B cell (primary cell): ENCODE measurements at regions of chr19 and their contacts with region 1.

Region 1: DNA sequence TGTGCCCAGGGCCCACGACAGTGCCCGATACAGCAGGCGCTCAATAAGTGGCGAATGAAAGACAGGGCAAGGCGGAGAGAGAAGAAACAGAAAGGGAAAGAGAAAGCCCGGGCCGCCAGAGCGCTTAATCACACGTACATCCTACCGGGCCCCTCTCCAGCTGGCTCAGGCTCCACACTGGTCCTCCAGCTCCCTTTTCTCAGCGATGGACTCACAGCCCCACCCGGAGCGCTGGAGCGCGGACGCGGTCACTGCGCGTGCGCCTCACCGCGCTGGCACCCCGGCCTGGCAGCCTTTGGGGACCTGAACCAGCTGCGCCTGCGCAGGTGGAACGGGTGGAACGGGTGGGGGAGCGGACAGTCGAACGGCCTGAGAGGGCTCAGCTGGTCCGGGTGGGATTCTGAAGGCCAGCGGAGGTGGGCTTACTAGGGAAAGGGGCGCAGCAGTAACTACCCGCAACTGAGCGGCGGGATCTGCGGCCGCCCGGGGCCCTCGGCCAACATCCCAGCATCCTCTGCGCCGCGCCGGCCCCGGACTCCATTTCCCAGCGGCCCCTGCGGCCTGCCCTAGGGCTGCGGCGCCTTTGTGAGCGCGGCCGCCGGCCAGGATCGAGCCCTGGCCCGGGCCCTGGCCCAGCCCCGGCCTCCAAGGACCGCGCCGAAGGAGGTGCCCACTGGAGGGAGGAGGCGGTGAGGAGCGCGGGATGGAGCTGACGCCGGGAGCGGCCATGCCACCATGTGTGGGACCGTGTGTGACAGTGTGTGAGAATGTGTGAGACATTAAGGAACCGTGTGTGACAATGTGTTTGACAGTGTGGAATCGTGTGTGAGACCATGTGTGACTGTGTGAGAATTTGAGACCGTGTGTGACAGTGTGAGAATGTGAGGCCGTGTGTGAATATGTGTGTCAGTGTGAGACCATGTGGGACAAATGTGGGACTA is at the start of gene ZNF583:
- DNase-seq: peak; percentile 95
- ATAC-seq: peak; percentile 89
- H3K4me3 ChIP-seq: peak within 1 kb of the TSS; percentile 75 to 97 (median 84)
- H3K4me3 Mint-ChIP-seq: peak within 1 kb of the TSS; percentile 92
- H3K27ac ChIP-seq: peak within 1 kb of the TSS; percentile 90 to 92
- H3K27ac Mint-ChIP-seq: peak within 1 kb of the TSS; percentile 92
- H3K4me1 ChIP-seq: peaks cover 14 to 19% of the 10 kb centered on the region in 2 donors
- H3K4me1 Mint-ChIP-seq: peaks cover 24% of the 10 kb centered on the region
- H3K27me3 ChIP-seq: no peaks in the 10 kb centered on the region
- H3K27me3 Mint-ChIP-seq: no peaks in the 10 kb centered on the region
- CTCF ChIP-seq: no peak
- total RNA-seq, gene ZNF583: 11.1 and 11.7 TPM in 2 replicates

Region 2: DNA sequence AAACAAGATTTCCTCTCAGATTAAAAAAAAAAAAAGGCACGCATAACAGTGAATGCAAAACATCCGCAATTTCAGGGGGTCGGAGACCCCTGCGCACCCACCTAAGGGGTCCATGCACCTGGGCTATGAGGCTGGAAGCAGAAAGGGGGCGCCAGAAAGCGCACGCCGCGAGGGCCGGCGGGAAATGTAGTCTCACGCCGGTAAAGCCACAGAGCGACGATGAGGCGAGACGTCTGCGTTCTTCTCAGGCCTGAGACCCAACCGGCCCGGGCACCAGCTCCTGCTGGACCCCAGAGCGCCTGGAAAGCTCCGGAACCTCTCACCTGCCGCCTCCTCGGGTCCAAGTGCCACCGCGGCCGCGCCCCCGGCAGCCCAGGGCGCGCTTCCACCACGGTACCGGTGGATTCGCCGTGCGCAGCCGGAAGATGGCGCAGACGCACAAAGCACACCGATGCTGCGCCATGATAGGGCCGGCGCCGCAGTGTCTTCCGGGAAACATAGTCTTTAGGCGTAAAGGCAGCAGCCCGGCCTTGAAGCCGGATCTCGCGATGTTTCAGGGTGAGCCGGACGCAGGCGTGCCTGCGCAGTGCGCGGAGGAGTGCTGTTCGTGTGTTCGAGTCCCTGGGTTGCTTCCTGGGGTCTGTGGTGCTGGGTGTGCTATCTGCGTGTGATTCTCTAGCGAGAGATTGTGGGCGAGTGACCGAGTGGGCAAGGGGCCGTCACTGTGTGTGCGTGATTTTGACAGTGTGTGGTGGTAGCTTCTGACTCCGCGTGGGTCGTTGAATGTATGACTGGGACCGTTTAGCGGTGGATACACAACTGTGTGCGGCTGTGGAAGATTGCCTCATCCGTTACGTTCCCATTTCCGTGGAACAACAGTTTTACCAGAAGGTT is 10.7 kb before region 1 on chr19 and contains the start of gene ZNF582:
- CTCF ChIA-PET with region 1: interaction called, 4 read pairs
- POLR2A ChIA-PET with region 1: interaction called, 6 read pairs
- intact Hi-C with region 1: loop called (anchors 1 kb)
- DNase-seq: peak; percentile 96
- ATAC-seq: peak; percentile 95
- H3K4me3 ChIP-seq: peak within 1 kb of the TSS; percentile 75 to 96 (median 82)
- H3K4me3 Mint-ChIP-seq: peak within 1 kb of the TSS; percentile 100
- H3K27ac ChIP-seq: peak within 1 kb of the TSS; percentile 93 to 98
- H3K27ac Mint-ChIP-seq: peak within 1 kb of the TSS; percentile 99
- H3K4me1 ChIP-seq: peaks cover 4 to 8% of the 10 kb centered on the region in 2 donors
- H3K4me1 Mint-ChIP-seq: peaks cover 17% of the 10 kb centered on the region
- H3K27me3 ChIP-seq: no peaks in the 10 kb centered on the region
- H3K27me3 Mint-ChIP-seq: no peaks in the 10 kb centered on the region
- CTCF ChIP-seq: peak; percentile 88
- total RNA-seq, gene ZNF582: 10.0 and 10.1 TPM in 2 replicates

Region 3: DNA sequence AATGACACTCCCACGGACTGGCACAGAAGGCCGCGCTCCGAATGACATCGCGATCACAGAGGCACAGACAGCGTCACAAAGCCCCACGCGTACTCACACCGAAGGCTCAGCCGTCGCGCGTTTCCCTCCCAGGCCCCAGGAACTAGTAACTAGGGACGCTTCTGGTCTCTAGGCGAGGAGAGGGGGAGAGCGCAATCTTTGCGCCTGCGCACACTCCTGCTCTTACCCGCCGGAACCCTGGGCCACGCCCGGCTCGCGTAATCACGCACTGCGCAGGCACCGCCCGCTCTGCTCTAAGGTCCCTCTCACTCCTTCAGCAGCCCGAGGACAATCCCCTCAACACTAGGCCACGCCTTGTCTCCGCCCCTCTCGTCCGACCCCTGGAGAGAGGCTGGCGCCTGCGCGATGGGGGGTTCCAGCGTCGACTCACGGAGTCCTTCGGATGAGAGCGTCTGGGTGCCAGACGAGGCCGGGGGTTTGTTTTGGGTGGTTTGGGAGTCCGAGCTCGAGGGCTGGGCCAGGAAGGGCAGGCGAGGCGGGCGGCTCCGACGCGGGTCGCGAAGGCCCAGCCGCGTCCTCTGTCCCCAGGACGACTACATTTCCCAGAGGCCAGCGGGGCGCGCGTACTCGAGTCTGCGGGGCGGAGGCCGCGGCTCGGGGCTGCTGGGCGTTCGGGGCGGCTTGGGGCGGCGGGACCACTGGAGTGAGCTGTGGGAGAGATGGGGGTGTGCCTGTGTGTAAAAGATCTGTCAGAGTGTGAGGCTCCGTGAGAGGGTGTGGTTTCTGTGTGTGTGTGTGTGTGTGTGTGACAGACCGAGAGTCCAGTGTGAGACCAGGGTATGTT is 103.6 kb after region 1 on chr19 and contains the start of gene ZNF471:
- CTCF ChIA-PET with region 1: no interaction called
- POLR2A ChIA-PET with region 1: no interaction called
- intact Hi-C with region 1: loop called (anchors 1 kb)
- DNase-seq: peak; percentile 95
- ATAC-seq: peak; percentile 99
- H3K4me3 ChIP-seq: peak within 1 kb of the TSS; percentile 55 to 77 (median 67)
- H3K4me3 Mint-ChIP-seq: no peak within 1 kb of the TSS
- H3K27ac ChIP-seq: peak within 1 kb of the TSS; percentile 89 to 97
- H3K27ac Mint-ChIP-seq: no peak within 1 kb of the TSS
- H3K4me1 ChIP-seq: peaks cover 10 to 13% of the 10 kb centered on the region in 2 donors
- H3K4me1 Mint-ChIP-seq: peaks cover 9% of the 10 kb centered on the region
- H3K27me3 ChIP-seq: no peaks in the 10 kb centered on the region
- H3K27me3 Mint-ChIP-seq: no peaks in the 10 kb centered on the region
- CTCF ChIP-seq: no peak
- total RNA-seq, gene ZNF471: 4.7 and 5.9 TPM in 2 replicates

Region 4: GRCh38 chr19:56567274-56568120 is 163.5 kb after region 1 on chr19 and contains the start of gene ZNF470:
- CTCF ChIA-PET with region 1: no interaction called
- POLR2A ChIA-PET with region 1: no interaction called
- intact Hi-C with region 1: loop called (anchors 1 kb)
- DNase-seq: peak; percentile 90
- ATAC-seq: peak; percentile 98
- H3K4me3 ChIP-seq: peak within 1 kb of the TSS; percentile 68 to 97 (median 91)
- H3K4me3 Mint-ChIP-seq: peak within 1 kb of the TSS; percentile 100
- H3K27ac ChIP-seq: peak within 1 kb of the TSS; percentile 50 to 68
- H3K27ac Mint-ChIP-seq: peak within 1 kb of the TSS; percentile 98
- H3K4me1 ChIP-seq: peaks cover 9 to 12% of the 10 kb centered on the region in 2 donors
- H3K4me1 Mint-ChIP-seq: peaks cover 17% of the 10 kb centered on the region
- H3K27me3 ChIP-seq: no peaks in the 10 kb centered on the region
- H3K27me3 Mint-ChIP-seq: no peaks in the 10 kb centered on the region
- CTCF ChIP-seq: no peak
- total RNA-seq, gene ZNF470: 6.9 and 11.9 TPM in 2 replicates

Region 5: DNA sequence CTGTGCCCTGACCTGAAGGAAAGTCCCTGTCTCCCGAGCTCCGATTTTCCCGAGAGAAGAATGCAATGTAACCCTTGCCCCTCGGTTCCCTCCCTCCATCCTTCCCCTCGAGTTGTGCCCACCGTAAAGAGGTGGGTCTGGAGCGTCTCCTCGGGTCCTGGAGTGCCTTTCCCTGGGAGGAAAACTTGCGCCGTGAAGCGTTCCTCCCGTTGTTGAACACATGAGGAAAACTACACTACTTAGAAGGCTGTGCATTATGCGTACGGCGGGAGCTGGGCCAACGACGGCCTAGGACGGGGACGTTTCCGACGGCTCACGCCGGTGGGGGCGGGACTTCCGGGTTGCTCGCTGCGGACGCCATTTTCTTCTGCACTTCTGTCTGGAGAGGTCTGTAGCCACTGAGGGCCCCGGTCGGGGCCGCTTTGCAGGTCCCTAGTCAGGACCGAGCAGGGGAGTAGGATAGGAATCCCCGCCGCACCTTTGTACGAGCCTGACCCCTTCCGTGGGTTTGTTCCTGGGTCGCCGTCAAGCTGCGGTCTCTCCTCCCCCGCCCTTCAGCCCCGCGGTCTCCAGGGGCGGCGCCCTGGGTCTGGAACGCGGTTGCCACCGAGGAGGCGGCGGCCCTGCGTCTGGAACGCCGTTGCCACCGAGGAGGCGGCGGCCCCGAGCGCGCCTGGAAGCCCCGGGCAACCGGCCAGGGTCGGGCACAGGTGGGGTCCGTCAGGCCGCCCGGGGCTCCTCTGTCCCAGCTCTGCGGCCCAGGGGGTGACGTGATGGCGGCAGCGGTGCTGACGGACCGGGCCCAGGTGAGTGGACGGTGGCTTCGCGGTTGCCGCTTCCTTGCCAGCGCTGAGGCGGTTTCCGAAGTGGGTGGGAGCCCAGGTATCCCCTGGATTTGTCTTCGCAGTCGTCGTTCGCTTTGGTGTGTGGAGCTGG is 787.4 kb after region 1 on chr19 and contains the start of gene ZNF264:
- CTCF ChIA-PET with region 1: no interaction called
- POLR2A ChIA-PET with region 1: no interaction called
- intact Hi-C with region 1: loop called (anchors 5 kb)
- DNase-seq: peak; percentile 92
- ATAC-seq: peak; percentile 98
- H3K4me3 ChIP-seq: peak within 1 kb of the TSS; percentile 69 to 94 (median 81)
- H3K4me3 Mint-ChIP-seq: peak within 1 kb of the TSS; percentile 92
- H3K27ac ChIP-seq: peak within 1 kb of the TSS; percentile 73 to 81
- H3K27ac Mint-ChIP-seq: peak within 1 kb of the TSS; percentile 96
- H3K4me1 ChIP-seq: peaks cover 20 to 21% of the 10 kb centered on the region in 2 donors
- H3K4me1 Mint-ChIP-seq: peaks cover 25% of the 10 kb centered on the region
- H3K27me3 ChIP-seq: peaks cover 0 to 11% (median 1%) of the 10 kb centered on the region in 4 experiments
- H3K27me3 Mint-ChIP-seq: peaks cover 9% of the 10 kb centered on the region
- CTCF ChIP-seq: no peak
- total RNA-seq, gene ZNF264: 72.4 and 82.6 TPM in 2 replicates